Common myeloid progenitor, CD34-positive (primary cell): ENCODE measurements at regions of chr10 and their contacts with region 1.

Region 1: GRCh38 chr10:88687853-88688467 is 18.1 kb upstream of the LIPK start:
- DNase-seq: peak; percentile 29 to 44 (median 43)
- H3K4me3 ChIP-seq: no peak overlapping the region
- H3K27ac ChIP-seq: no peak overlapping the region
- H3K4me1 ChIP-seq: no peaks in the 10 kb centered on the region
- H3K27me3 ChIP-seq: no peaks in the 10 kb centered on the region

Region 2: DNA sequence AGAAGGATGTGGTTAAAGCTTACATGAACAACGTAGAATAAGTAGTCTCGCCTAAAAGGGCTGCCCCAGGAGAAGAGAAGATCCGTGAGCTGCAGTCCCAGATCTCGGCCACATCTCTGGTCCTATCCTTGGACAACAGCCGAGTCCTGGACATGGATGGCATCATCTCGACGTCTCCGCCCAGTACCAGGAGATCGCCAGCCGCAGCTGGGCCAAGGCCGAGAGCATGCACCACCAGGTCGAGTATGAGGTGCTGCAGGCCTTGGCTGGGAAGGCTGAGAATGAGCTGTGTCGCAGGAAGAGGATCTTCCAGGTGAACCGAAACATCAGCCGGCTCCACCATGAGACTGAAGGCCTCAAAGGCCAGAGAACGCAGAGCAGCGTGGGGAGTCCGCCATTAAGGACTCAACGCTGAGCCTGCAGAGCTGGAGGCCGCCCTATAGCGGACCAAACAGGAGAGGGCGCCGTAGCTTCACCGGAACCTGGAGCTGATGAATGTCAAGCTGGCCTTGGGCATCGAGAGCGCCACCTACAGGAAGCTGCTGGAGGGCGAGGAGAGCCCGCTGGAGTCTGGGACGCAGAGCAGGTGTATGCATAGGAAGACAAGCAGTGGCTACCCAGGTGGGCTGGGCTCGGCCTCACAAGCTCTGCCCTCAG is 40.3 kb after region 1 on chr10:
- CTCF ChIA-PET with region 1: interaction called, 10 read pairs
- POLR2A ChIA-PET with region 1: no interaction called
- DNase-seq: peak in 2 of 3 donors; percentile 29 to 37
- H3K4me3 ChIP-seq: no peak overlapping the region
- H3K27ac ChIP-seq: no peak overlapping the region
- H3K4me1 ChIP-seq: peaks cover 4 to 33% (median 19%) of the 10 kb centered on the region in 4 experiments
- H3K27me3 ChIP-seq: no peaks in the 10 kb centered on the region

Region 3: DNA sequence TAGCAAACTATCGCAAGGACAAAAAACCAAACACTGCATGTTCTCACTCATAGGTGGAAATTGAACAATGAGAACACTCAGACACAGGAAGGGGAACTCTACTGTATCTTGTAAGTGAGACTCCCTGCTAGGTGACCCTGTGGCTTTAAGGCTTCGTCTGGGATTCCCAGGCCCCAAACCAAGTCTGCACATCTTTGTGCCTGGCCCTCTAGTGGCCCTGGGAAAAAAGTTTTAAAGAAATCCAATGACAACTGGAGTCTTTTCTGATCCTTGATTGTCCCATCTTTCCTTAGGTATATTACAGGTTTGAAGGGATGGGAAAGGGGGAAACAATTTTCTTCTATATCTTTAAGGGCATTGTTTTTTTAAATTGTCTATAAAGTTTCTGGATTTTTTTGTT is 104.0 kb after region 1 on chr10:
- CTCF ChIA-PET with region 1: interaction called, 17 read pairs
- POLR2A ChIA-PET with region 1: no interaction called
- DNase-seq: peak; percentile 20 to 48 (median 28)
- H3K4me3 ChIP-seq: no peak overlapping the region
- H3K27ac ChIP-seq: no peak overlapping the region
- H3K4me1 ChIP-seq: peaks cover 0 to 11% (median 0%) of the 10 kb centered on the region in 4 experiments
- H3K27me3 ChIP-seq: no peaks in the 10 kb centered on the region